ENCODE measurements at regions of chr5 and their contacts with region 1.

Region 1: GRCh38 chr5:134184155-134185135 is 7.7 kb upstream of the SKP1 start:
- DNase-seq: peak; percentile 82
- ATAC-seq: peak; percentile 88

Region 2: DNA sequence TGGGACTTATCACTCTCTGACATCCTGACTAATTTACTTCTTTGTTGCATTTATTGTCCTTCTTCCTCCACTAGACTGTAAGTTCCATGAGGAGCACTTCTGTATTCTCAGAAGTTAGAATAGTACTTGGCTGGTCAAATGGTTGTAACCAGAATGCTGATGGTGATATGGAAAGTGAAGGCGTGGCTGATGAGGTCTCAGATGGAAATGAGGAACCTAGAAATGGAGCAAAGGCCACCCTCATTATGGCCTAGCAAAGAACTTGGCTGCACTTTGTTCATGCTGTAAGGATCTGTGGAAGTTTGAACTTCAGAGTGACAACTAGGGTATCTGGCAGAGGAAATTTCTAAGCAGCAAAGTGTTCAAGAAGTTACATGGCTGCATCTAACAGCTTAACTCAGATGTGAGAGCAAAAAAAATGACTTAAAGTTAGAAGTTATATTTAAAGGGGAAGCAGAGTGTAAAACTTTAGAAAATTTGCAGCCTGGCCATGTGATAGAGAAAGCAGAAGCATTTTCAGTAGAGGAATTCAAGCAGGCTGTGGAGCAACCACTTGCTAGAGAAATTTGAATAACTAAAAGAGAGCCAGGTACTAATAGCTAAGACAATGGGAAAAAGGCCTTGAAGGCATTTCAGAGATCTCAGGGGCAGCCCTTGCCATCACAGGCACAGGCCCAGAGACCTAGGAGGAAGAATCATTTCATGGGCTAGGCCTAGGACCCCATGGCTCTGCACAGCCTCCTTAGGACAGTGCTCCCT is 1829.9 kb before region 1 on chr5:
- intact Hi-C with region 1: no loop called
- DNase-seq: no peak
- ATAC-seq: peak; percentile 44

Region 3: DNA sequence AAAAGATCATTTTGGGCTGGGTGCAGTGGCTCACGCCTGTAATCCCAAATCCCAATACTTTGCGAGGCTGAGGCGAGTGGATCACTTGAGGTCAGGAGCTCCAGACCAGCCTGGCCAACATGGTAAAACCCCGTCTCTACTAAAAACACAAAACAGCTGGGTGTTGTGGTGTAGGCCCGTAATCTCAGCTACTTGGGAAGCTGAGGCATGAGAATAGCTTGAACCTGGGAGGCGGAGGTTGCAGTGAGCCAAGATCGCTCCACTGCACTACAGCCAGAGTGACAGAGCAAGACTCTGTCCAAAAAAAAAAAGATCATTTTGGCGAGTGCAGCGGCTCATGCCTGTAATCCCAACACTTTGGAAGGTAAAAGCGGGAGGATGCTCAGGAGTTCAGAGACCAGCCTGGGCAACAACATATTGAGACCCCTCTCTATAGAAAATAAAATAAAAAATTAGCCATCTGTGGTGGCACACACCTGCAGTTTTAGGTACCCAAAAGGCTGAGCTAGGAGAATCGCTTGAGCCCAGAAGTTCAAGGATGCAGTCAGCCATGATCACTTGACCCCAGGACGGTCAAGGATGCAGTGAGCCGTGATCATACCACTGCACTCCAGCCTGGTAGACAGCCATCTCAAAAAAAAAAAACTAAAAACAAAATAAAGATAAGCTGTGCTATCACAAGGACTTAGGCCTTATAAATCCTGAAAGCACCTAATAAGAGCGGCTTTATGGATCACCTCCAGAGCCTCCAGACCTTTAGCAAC is 25.2 kb after region 1 on chr5:
- intact Hi-C with region 1: no loop called
- DNase-seq: no peak
- ATAC-seq: no peak

Region 4: DNA sequence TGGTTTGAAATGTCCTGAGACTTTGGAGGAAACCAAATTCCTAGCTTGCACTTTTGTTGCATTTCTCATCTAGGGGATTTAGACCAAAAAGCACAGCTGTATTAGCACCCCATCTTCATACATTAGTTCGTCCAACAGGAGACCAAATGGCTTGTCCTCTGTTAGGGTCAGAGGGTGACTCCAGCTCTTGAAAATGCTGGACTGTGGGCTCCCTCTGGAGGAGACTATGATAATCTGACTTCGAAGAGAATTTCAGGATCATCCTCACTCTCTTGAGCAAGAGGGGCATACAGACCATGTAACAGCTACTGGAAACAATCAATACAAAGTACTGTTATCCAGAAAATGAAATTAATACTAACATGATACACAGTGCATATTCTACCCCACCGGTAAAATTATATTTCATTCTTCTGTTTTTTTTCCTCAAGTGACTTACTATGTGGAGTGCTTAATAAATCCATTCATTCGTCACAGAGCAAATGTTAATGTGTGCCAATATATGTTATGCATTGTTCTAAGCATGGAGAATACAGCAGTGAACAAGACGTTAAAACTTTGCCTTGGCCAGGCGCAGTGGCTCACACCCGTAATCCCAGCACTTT is 105.2 kb after region 1 on chr5:
- intact Hi-C with region 1: loop called (anchors 5 kb)
- DNase-seq: no peak
- ATAC-seq: peak; percentile 90